Esophagus squamous epithelium (tissue), 5 donors: ENCODE measurements at regions of chr1 and their contacts with region 1.

Region 1: GRCh38 chr1:19651141-19651737 is 7.1 kb downstream of the NBL1 start:
- DNase-seq: no peak
- H3K4me3 ChIP-seq: peak overlapping the region in 2 of 4 donors; percentile 17 to 48
- H3K27ac ChIP-seq: peak overlapping the region; percentile 73 to 99 (median 91)
- H3K4me1 ChIP-seq: peaks cover 42 to 99% (median 86%) of the 10 kb centered on the region in 3 donors
- H3K27me3 ChIP-seq: no peaks in the 10 kb centered on the region
- CTCF ChIP-seq: peak in 5 of 6 experiments; percentile 42 to 61 (median 54)
- POLR2A ChIP-seq: no peak

Region 2: GRCh38 chr1:19251305-19252196 is 399.7 kb before region 1 on chr1 and contains the starts of genes EMC1 and MRTO4:
- intact Hi-C with region 1: loop called (anchors 10 kb)
- DNase-seq: peak; percentile 16
- H3K4me3 ChIP-seq: peak within 1 kb of the TSS; percentile 73 to 96 (median 84)
- H3K27ac ChIP-seq: peak within 1 kb of the TSS; percentile 91 to 95 (median 94)
- H3K4me1 ChIP-seq: peaks cover 17 to 48% (median 26%) of the 10 kb centered on the region in 3 donors
- H3K27me3 ChIP-seq: no peaks in the 10 kb centered on the region
- CTCF ChIP-seq: peak in 1 of 6 experiments; percentile 43
- POLR2A ChIP-seq: peak in 1 of 4 donors; percentile 14
- total RNA-seq, gene EMC1: 18.7 to 38.0 (median 34.7) TPM
- total RNA-seq, gene MRTO4: 25.4 to 48.3 (median 34.2) TPM